Panc1 (cell line): ENCODE measurements at regions of chr16 and their contacts with region 1.

Region 1: DNA sequence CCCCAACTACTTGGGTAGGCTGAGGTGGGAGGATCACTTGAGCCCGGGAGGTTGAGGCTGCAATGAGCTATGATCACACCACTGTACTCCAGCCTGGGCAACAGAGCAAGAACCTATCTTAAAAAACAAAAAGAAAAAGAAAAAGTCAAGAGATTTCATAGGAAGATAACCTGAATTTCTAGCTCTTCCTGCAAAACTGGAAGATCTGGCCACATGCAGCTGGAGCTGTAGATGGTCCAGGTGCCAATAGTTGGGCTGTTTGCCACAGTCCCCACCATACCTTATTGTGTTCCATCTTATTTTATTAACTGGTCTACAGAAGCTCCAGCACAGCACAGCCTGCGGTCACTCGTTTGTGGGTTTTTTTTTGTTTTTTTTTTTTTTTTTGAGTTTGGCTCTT is 15.0 kb downstream of the ATP2A1 start:
- DNase-seq: no peak
- ATAC-seq: no peak
- H3K4me3 ChIP-seq: no peak overlapping the region
- H3K27ac ChIP-seq: no peak overlapping the region
- H3K4me1 ChIP-seq: no peaks in the 10 kb centered on the region
- H3K27me3 ChIP-seq: no peaks in the 10 kb centered on the region
- CTCF ChIP-seq: no peak

Region 2: GRCh38 chr16:28879841-28880588 is 13.3 kb before region 1 on chr16:
- CTCF ChIA-PET with region 1: interaction called, 6 read pairs
- POLR2A ChIA-PET with region 1: interaction called, 10 read pairs
- in situ Hi-C with region 1: no loop called
- intact Hi-C with region 1: no loop called
- DNase-seq: peak; percentile 30
- ATAC-seq: peak; percentile 92
- H3K4me3 ChIP-seq: peak overlapping the region; percentile 70 to 76
- H3K27ac ChIP-seq: peak overlapping the region; percentile 77
- H3K4me1 ChIP-seq: peaks cover 31% of the 10 kb centered on the region
- H3K27me3 ChIP-seq: no peaks in the 10 kb centered on the region
- CTCF ChIP-seq: no peak